ENCODE measurements at regions of chr3 and their contacts with region 1.

Region 1: DNA sequence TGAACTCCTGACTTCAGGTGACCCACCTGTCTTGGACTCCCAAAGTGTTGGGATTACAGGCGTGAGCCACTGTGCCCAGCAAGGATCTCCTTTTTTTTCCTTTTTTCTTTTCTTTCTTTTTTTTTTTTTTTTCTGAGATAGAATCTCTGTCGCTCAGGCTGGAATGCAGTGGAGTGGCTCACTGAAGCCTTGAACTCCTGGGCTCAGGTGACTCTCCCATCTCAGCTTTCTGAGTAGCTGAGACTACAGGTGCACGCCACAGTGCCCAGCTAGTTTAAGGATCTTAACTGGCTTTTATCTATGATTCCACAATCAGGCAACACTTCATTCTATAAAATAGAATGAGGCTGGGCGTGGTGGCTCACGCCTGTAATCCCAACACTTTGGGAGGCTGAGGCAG is 16.3 kb upstream of the NICN1 start:
- DNase-seq: no peak
- ATAC-seq: no peak
- H3K4me3 ChIP-seq: no peak overlapping the region
- H3K27ac ChIP-seq: no peak overlapping the region
- H3K4me1 ChIP-seq: peaks cover 7 to 15% of the 10 kb centered on the region in 2 experiments
- H3K27me3 ChIP-seq: no peaks in the 10 kb centered on the region
- CTCF ChIP-seq: no peak
- POLR2A ChIP-seq: no peak
- RAD21 ChIP-seq: no peak

Region 2: DNA sequence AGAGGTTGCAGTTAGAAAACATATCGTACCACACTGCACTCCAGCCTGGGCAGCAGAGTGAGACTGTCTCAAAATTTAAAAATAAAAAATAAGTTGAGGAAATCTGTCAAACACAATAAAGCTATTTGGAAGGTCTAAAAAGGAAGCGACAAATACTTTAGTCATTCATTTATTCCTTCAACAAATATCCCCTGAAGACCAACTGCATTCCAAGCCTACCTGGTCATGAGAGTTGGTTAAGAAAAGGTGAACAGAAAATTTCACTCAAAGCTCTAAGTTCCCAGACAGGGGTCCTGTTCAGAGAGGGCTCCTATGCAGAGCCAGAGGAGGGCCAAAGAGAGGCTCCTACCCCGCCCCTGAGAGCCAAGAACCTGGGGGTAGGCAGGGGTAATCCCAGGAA is 582.3 kb before region 1 on chr3:
- CTCF ChIA-PET with region 1: no interaction called
- POLR2A ChIA-PET with region 1: no interaction called
- RAD21 ChIA-PET with region 1: no interaction called
- intact Hi-C with region 1: no loop called
- DNase-seq: no peak
- ATAC-seq: no peak
- H3K4me3 ChIP-seq: no peak overlapping the region
- H3K27ac ChIP-seq: no peak overlapping the region
- H3K4me1 ChIP-seq: peaks cover 0 to 6% of the 10 kb centered on the region in 2 experiments; a peak in 1 of 4 replicates
- H3K27me3 ChIP-seq: no peaks in the 10 kb centered on the region
- CTCF ChIP-seq: no peak
- POLR2A ChIP-seq: no peak
- RAD21 ChIP-seq: no peak

Region 3: GRCh38 chr3:49327485-49327884 is 117.9 kb before region 1 on chr3:
- CTCF ChIA-PET with region 1: no interaction called
- POLR2A ChIA-PET with region 1: interaction called, 5 read pairs
- RAD21 ChIA-PET with region 1: no interaction called
- intact Hi-C with region 1: loop called (anchors 5 kb)
- DNase-seq: no peak
- ATAC-seq: peak; percentile 72
- H3K4me3 ChIP-seq: no peak overlapping the region
- H3K27ac ChIP-seq: no peak overlapping the region
- H3K4me1 ChIP-seq: no peaks in the 10 kb centered on the region
- H3K27me3 ChIP-seq: no peaks in the 10 kb centered on the region
- CTCF ChIP-seq: peak in 2 of 3 experiments; percentile 46 to 48; a peak in 4 of 6 replicates
- POLR2A ChIP-seq: no peak
- RAD21 ChIP-seq: peak; percentile 41